Thyroid gland (tissue), 4 donors: ENCODE measurements at regions of chr12 and their contacts with region 1.

Region 1: GRCh38 chr12:100142851-100143559 is at the start of gene BLTP3B:
- DNase-seq: peak; percentile 94 to 96
- H3K4me3 ChIP-seq: peak within 1 kb of the TSS; percentile 85 to 97 (median 92)
- H3K27ac ChIP-seq: peak within 1 kb of the TSS; percentile 94 to 99 (median 97)
- H3K4me1 ChIP-seq: peaks cover 10 to 22% of the 10 kb centered on the region in 2 donors
- H3K27me3 ChIP-seq: no peaks in the 10 kb centered on the region
- CTCF ChIP-seq: peak in 1 of 6 experiments; percentile 12
- POLR2A ChIP-seq: no peak
- total RNA-seq, gene BLTP3B: 27.5 to 41.0 (median 38.9) TPM

Region 2: GRCh38 chr12:100199347-100200149 is 56.5 kb after region 1 on chr12:
- intact Hi-C with region 1: loop called (anchors 10 kb)
- DNase-seq: peak; percentile 90
- H3K4me3 ChIP-seq: peak overlapping the region; percentile 16 to 71 (median 20)
- H3K27ac ChIP-seq: peak overlapping the region; percentile 41 to 87 (median 61)
- H3K4me1 ChIP-seq: peaks cover 10 to 16% of the 10 kb centered on the region in 2 donors
- H3K27me3 ChIP-seq: no peaks in the 10 kb centered on the region
- CTCF ChIP-seq: no peak
- POLR2A ChIP-seq: peak in 1 of 2 donors; percentile 16

Region 3: DNA sequence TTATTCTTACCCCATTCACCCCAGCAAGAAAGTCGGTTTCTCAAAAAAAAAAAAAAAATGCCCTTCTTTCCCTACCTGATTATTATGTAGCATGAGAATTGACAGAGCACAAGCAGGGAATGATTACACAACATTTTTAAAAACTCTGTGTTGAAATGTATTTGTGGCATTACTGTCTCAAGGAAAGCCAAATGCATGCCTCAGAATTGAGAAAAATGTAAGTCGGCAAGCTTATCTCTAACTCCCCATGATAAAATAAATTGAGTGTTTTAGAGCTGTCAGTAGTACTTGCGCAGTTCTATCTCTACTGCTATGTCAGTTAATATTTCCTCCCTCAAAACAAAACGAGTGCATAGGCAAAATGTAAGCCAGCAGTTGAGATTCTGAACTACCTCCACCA is 677.3 kb after region 1 on chr12:
- intact Hi-C with region 1: no loop called
- DNase-seq: no peak
- H3K4me3 ChIP-seq: no peak overlapping the region
- H3K27ac ChIP-seq: no peak overlapping the region
- H3K4me1 ChIP-seq: no peaks in the 10 kb centered on the region
- H3K27me3 ChIP-seq: no peaks in the 10 kb centered on the region
- CTCF ChIP-seq: no peak
- POLR2A ChIP-seq: no peak